ENCODE measurements at regions of chr9 and their contacts with region 1.

Region 1: GRCh38 chr9:92790542-92791527 is 26.2 kb upstream of the BICD2 start:
- DNase-seq: peak; percentile 47 to 94 (median 84)

Region 2: DNA sequence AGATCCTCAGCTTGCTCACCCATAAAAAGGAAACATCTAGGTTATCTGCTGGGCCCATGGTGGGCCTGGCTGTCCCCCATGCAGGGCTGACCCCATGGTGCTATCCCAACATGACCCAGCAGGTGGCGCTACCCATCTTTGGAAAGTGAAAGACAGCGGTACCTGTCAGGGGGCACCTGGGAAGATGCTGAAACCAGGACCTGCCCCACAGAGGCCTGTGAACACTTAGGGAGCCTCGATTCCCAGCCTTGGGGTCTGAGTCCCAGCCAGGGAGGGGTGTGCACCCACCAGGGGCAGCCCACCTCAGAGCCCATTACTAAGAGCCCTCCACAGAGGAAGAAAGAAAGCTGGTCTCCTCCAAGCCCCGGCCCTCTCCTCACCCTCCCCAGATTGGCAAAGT is 74.3 kb before region 1 on chr9:
- intact Hi-C with region 1: loop called (anchors 5 kb)
- DNase-seq: peak in 41 of 42 donors; percentile 49 to 90 (median 73)

Region 3: GRCh38 chr9:92947268-92948047 is 156.6 kb after region 1 on chr9 and contains the start of gene FGD3:
- intact Hi-C with region 1: no loop called
- DNase-seq: peak in 9 of 42 donors; percentile 8 to 40 (median 26)